PC-9 (cell line): ENCODE measurements at regions of chr7 and their contacts with region 1.

Region 1: DNA sequence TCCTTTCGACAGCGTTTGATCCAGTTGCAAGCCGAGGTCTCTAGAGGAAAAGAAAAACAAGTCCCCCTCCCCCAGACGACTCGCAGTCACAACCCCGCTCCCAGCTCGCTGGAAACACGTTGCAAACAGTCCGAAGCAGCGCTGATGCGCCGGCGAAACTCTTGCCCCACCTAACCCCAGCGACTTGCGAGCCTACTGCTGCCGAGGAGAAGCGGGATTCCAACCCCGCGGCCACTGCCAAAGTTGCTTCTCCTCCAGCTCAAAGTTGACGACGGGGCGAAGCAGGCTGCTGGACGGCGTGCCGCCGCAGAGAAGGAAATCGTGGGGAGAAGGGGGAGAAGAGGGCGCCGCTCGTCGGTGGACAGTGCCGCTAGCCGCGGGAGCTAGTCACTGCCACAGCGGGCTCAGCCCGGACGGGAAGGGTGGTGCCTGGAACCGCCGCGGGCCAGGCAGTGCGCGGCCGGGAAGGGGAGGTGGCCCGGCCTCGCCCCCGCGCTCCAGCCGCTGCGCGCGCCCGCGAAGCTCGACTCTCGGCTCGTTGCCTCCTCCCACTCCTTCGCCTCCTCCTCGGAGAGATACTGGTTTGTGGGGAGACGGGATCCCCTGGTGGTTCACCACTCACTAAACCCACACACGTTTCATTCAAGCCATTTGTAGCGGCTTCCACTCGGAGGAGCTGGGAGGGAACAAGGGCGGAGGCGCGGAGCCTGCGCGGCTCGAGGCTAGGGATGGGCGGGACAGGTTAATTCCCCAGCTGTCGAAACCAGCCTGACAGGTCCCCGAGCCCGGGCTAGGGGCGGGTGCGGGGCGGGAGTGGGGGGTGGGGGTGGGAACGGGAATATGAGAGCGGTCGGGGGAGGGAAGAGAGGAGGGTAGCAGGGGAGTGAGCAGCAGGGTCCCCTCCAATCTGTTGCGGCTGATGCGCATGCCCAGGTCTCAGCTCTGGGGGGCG is at the start of gene GPR37:
- DNase-seq: peak; percentile 63 to 87
- H3K4me3 ChIP-seq: peak within 1 kb of the TSS; percentile 73
- H3K27ac ChIP-seq: no peak within 1 kb of the TSS
- H3K4me1 ChIP-seq: no peaks in the 10 kb centered on the region; the same call in 1 of the 2 replicates
- H3K27me3 ChIP-seq: peaks cover 2% of the 10 kb centered on the region; the same call in 1 of the 2 replicates
- CTCF ChIP-seq: no peak; the same call in 1 of the 2 replicates
- total RNA-seq, gene GPR37: 1.8 and 1.9 TPM in 2 replicates

Region 2: GRCh38 chr7:124667312-124668153 is 98.1 kb before region 1 on chr7:
- CTCF ChIA-PET with region 1: no interaction called
- POLR2A ChIA-PET with region 1: interaction called, 16 read pairs
- intact Hi-C with region 1: loop called (anchors 1 kb)
- DNase-seq: peak in 1 of 2 experiments; percentile 24
- H3K4me3 ChIP-seq: no peak overlapping the region
- H3K27ac ChIP-seq: no peak overlapping the region
- H3K4me1 ChIP-seq: no peaks in the 10 kb centered on the region
- H3K27me3 ChIP-seq: no peaks in the 10 kb centered on the region
- CTCF ChIP-seq: no peak